Activated CD8-positive, alpha-beta T cell treated with anti-CD3 and anti-CD28 coated beads for 36 hours (primary cell): ENCODE measurements at regions of chr14 and their contacts with region 1.

Region 1: DNA sequence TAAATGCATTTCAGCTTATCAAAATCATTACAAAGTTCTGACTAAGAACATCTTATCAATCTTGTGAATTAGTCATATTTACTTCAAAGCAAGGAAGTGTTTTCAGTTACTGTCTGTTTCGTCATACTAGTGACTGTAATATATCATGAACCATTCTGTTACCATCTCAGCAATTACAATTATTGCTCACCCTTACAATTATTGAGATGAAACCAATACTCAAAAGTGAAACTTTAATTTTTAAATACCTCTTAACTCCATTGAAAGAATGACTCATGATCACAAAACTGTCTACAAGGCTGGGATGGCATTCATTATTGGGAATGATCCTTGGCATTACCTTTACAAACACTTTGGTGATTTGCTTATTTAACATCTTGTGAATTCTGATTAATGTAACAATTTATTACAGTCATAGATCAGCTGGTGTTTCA is 90.3 kb downstream of the RPS6KA5 start:
- DNase-seq: no peak
- ATAC-seq: peak; percentile 85
- H3K4me3 Mint-ChIP-seq: peak overlapping the region; percentile 42
- H3K27ac Mint-ChIP-seq: peak overlapping the region; percentile 89
- H3K4me1 Mint-ChIP-seq: peaks cover 49% of the 10 kb centered on the region
- H3K27me3 Mint-ChIP-seq: no peaks in the 10 kb centered on the region
- CTCF ChIP-seq: no peak

Region 2: GRCh38 chr14:90894241-90894640 is 75.9 kb before region 1 on chr14:
- CTCF ChIA-PET with region 1: no interaction called
- POLR2A ChIA-PET with region 1: no interaction called
- intact Hi-C with region 1: no loop called
- DNase-seq: no peak
- ATAC-seq: no peak
- H3K4me3 Mint-ChIP-seq: no peak overlapping the region
- H3K27ac Mint-ChIP-seq: no peak overlapping the region
- H3K4me1 Mint-ChIP-seq: peaks cover 4% of the 10 kb centered on the region
- H3K27me3 Mint-ChIP-seq: no peaks in the 10 kb centered on the region
- CTCF ChIP-seq: no peak

Region 3: DNA sequence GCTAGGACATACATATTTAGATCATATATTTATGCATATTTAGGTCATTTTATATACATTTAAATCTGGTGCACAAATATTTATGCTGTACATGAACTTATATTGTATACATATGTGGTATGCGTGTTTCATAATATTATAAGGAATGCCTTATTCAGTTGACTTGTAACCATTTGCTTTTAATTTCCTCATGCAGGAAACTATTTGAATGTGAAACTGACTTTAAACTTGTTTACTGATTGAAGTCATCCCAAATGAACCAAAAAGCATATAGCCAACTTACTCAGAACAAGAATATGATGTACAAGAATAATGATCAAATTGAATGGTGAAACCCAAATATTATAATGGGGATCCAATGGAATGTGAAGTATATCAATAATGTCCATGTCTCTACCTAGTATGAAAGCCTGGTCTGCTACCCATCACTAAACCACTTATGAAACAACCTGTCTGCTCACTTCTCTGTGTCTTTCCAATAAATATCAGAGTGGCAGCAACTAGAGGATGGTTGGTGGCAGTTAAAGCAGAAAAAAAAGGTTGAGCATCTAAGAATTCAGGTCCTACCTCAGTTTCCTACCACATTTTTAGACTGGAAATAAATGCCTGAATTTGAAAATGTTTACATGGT is 51.9 kb after region 1 on chr14:
- CTCF ChIA-PET with region 1: no interaction called
- POLR2A ChIA-PET with region 1: interaction called, 6 read pairs
- intact Hi-C with region 1: loop called (anchors 5 kb)
- DNase-seq: no peak
- ATAC-seq: peak; percentile 68
- H3K4me3 Mint-ChIP-seq: peak overlapping the region; percentile 66
- H3K27ac Mint-ChIP-seq: peak overlapping the region; percentile 86
- H3K4me1 Mint-ChIP-seq: peaks cover 54% of the 10 kb centered on the region
- H3K27me3 Mint-ChIP-seq: no peaks in the 10 kb centered on the region
- CTCF ChIP-seq: no peak

Region 4: DNA sequence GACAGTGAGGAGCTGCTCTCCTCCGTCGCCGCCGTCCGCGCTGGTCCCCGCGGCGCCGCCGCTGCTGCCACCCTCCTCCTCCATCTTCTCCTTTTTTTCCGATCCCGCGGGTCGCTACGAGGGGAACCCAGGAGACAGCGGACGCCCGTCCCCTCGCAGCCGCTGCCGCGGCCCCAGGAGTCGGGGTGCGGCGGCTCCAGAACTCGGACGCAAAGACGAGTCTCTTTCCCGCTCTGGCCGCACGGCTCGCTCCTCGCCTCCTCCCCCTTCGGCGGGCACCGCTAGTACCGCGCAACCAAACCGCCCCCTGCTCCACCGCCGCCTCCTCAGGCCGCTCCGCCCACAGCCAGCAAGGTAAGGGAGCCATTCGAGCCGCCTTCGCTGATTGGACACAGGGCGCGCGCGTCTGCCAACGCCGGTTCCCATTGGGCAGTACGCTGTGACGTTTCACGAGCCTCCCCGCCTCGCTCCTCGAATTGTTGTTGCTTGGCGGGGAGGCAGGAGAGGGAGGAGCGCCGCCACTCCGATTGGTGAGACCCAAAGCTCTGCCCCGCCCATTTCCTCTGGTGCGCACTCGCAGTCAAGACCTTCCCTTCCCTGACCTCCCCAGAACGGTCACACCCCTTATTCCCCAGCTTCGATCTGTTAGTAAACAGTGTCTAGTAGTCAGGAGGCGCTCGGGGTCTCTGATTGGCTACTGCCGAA is 90.3 kb after region 1 on chr14 and contains the start of gene RPS6KA5:
- CTCF ChIA-PET with region 1: interaction called, 3 read pairs
- POLR2A ChIA-PET with region 1: interaction called, 15 read pairs
- intact Hi-C with region 1: no loop called
- DNase-seq: peak; percentile 100
- ATAC-seq: peak; percentile 86
- H3K4me3 Mint-ChIP-seq: peak within 1 kb of the TSS; percentile 77
- H3K27ac Mint-ChIP-seq: peak within 1 kb of the TSS; percentile 58
- H3K4me1 Mint-ChIP-seq: peaks cover 53% of the 10 kb centered on the region
- H3K27me3 Mint-ChIP-seq: no peaks in the 10 kb centered on the region
- CTCF ChIP-seq: no peak
- total RNA-seq, gene RPS6KA5: 12.8 to 12.9 TPM

Region 5: GRCh38 chr14:91078095-91078737 is 108.0 kb after region 1 on chr14:
- CTCF ChIA-PET with region 1: no interaction called
- POLR2A ChIA-PET with region 1: no interaction called
- intact Hi-C with region 1: loop called (anchors 1 kb)
- DNase-seq: peak; percentile 78
- ATAC-seq: peak; percentile 96
- H3K4me3 Mint-ChIP-seq: no peak overlapping the region
- H3K27ac Mint-ChIP-seq: peak overlapping the region; percentile 81
- H3K4me1 Mint-ChIP-seq: peaks cover 29% of the 10 kb centered on the region
- H3K27me3 Mint-ChIP-seq: no peaks in the 10 kb centered on the region
- CTCF ChIP-seq: no peak